Activated CD4-positive, alpha-beta T cell treated with anti-CD3 and anti-CD28 coated beads, Interleukin-2, amount 10 ng/mL, durations not matched to agents 7 days and 5 days (primary cell): ENCODE measurements at regions of chr2 and their contacts with region 1.

Region 1: GRCh38 chr2:27356382-27357181 is at the start of gene GTF3C2:
- DNase-seq: peak; percentile 95
- H3K4me3 Mint-ChIP-seq: peak within 1 kb of the TSS; percentile 94
- H3K27ac Mint-ChIP-seq: peak within 1 kb of the TSS; percentile 99
- H3K4me1 Mint-ChIP-seq: peaks cover 51% of the 10 kb centered on the region
- H3K27me3 Mint-ChIP-seq: no peaks in the 10 kb centered on the region
- total RNA-seq, gene GTF3C2: 54.3 to 59.0 TPM

Region 2: GRCh38 chr2:27370026-27370815 is 13.6 kb after region 1 on chr2 and contains the starts of genes EIF2B4 and SNX17:
- CTCF ChIA-PET with region 1: interaction called, 15 read pairs
- POLR2A ChIA-PET with region 1: interaction called, 3 read pairs
- DNase-seq: peak; percentile 99
- H3K4me3 Mint-ChIP-seq: peak within 1 kb of the TSS; percentile 84
- H3K27ac Mint-ChIP-seq: peak within 1 kb of the TSS; percentile 97
- H3K4me1 Mint-ChIP-seq: peaks cover 45% of the 10 kb centered on the region
- H3K27me3 Mint-ChIP-seq: no peaks in the 10 kb centered on the region
- total RNA-seq, gene EIF2B4: 40.9 to 42.2 TPM
- total RNA-seq, gene SNX17: 109 to 120 TPM

Region 3: GRCh38 chr2:27615316-27615715 is 258.7 kb after region 1 on chr2:
- CTCF ChIA-PET with region 1: no interaction called
- POLR2A ChIA-PET with region 1: no interaction called
- DNase-seq: no peak
- H3K4me3 Mint-ChIP-seq: no peak overlapping the region
- H3K27ac Mint-ChIP-seq: no peak overlapping the region
- H3K4me1 Mint-ChIP-seq: no peaks in the 10 kb centered on the region
- H3K27me3 Mint-ChIP-seq: no peaks in the 10 kb centered on the region